ENCODE measurements at regions of chr4 and their contacts with region 1.

Region 1: DNA sequence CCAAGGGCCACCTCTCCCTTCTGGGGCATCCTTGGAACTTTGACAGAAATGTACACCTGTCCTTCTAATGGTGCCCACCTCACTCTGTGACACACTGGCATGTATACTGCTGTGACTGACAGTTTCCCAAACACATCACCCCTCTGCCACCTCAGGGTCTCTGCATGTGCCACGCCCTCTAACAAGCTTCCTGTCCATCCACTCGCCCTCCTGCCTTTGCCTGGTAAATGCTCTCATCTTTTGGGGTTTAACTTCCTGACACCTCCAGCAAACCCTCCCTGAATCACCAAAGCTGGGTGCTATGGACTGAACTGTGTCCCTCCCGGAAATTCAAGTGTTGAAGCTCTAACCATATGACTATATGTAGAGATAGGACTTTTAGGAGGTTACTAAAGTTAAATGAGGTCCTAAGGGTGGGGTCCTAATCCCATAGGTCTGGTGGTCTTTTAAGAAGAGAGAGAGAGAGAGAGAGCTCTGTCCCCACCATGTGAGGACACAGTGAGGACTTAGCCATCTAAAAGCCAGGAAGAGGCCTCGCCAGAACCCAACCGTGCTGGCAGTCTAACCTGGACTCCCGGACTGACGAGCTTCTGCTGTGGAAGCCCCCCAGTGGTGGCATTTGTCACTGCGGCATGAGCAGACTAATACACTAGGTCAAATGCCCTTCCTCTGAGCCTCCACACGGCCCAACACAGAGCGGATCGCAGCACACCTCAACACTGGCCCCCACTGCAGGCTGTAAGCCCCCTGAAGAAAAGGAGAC is 95.6 kb downstream of the AFAP1 start:
- H3K4me3 ChIP-seq: no peak overlapping the region
- H3K27ac ChIP-seq: no peak overlapping the region
- H3K4me1 ChIP-seq: no peaks in the 10 kb centered on the region
- CTCF ChIP-seq: peak; percentile 26; the same call in 1 of the 2 replicates

Region 2: DNA sequence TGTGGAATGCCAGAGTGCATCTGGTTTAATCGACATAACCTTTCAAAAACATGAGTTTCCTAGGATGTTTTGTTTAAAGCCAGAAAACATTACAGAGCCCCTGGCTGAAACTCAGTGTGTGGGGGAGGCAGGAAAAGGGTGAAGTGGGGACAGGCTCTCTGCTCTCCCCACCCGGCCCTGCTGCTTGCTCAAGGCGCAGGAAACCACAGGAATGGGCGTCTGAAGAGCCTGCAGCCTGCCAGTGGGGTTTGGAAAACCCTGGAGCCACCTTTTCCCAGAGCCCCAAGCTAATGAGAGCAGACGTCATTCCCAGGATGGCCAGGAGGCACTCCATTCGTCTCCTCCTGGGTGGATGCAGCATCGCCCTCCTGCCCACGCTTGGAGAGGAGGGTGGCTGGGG is 145.0 kb before region 1 on chr4:
- CTCF ChIA-PET with region 1: no interaction called
- POLR2A ChIA-PET with region 1: no interaction called
- H3K4me3 ChIP-seq: no peak overlapping the region
- H3K27ac ChIP-seq: no peak overlapping the region
- H3K4me1 ChIP-seq: no peaks in the 10 kb centered on the region
- CTCF ChIP-seq: no peak

Region 3: DNA sequence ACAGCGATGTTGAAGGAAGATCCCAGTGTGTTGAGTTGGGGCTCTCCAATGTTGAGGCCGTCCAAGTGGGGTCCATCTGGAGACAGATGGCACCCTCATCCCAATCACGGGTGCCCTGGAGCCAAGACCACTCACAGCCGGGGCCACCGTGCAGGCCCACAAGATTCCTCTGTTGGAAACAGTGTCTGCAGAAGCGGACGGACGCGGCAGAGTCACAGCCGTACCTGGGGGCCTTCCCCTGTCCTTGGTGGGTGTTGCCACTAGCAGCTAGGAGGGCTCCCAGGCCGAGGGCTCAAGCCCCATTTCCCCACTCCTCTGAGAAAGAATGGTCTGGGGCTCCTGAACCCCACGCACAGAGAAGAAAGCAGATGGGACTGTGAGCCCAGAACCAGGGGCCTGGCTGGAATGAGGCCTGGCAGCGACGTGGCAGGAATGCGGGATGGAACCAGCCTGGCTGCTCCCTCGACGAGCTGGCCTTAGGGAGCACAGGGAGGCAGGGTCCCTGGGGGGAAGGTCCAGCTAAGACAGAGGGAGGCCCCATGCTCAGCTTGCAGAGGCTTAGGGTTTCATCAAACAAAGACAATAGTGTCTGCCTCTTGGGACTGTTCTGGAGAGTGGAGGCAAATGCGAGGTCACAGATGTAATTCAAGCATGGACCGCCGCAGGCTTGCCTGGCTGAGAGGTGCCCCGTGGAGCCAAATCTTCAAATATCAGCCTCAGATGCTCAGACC is 133.3 kb before region 1 on chr4:
- CTCF ChIA-PET with region 1: no interaction called
- POLR2A ChIA-PET with region 1: no interaction called
- H3K4me3 ChIP-seq: no peak overlapping the region
- H3K27ac ChIP-seq: no peak overlapping the region
- H3K4me1 ChIP-seq: no peaks in the 10 kb centered on the region
- CTCF ChIP-seq: no peak

Region 4: DNA sequence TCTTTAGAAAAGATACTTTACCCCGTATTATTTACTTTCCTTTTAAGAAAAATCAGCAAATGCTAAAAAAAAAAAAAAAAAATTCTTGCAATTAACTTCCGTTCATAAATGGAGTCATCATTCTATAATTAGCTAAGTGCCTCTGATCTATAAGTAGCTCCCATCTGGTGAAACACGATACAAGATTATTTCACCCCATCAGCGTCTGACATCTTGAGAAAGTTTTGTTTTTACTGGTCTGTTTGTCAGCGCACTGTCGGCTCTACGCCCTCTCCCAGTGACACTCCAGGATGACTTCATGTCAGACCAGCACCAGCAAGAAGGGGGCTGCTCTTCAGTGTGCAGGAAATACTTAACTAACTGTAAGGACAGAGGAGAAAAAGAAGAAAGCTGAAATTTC is 12.7 kb before region 1 on chr4:
- CTCF ChIA-PET with region 1: interaction called, 10 read pairs
- POLR2A ChIA-PET with region 1: no interaction called
- H3K4me3 ChIP-seq: no peak overlapping the region
- H3K27ac ChIP-seq: no peak overlapping the region
- H3K4me1 ChIP-seq: no peaks in the 10 kb centered on the region
- CTCF ChIP-seq: no peak

Measured in HEK293 (cell line).